ENCODE measurements at regions of chr1 and their contacts with region 1.

Region 1: DNA sequence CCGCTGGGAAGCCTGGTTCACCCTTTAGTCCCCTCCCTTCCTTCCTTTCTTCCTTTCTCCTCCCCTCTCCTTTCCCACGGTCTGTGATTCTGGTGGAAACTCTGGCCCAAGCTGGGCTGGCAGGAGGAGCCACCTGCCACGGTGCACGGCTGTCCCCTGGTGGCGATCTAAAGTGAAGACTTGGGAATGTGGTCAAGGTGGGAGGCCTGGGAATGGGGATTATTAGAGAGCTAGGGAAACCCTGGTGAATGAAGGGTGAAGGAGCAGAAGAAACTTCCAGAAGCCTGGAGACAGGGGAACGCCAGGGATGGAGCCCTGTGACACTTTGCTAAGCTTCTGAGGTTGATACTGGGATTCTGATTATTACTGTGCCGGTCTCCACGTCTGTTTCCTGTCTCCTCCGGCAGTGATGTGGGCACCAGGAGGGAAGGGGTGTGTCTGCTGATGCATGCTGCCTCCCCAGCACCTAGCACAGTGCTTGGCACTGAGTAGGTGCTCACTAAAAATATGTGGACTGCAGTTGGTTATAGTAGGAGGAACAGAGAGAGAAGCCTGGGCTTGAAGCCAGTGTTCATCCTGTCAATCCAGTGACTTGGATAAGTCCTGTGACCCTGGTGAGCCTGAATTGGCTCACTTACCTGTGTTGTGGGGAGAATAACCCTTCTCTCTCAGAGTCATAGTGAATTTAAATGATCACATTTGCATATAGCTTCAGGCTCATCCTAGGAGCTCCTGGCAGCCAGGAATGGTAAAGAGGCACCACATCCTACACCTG is 71.2 kb upstream of the NBPF3 start:
- DNase-seq: peak; percentile 66 to 94 (median 85)

Region 2: DNA sequence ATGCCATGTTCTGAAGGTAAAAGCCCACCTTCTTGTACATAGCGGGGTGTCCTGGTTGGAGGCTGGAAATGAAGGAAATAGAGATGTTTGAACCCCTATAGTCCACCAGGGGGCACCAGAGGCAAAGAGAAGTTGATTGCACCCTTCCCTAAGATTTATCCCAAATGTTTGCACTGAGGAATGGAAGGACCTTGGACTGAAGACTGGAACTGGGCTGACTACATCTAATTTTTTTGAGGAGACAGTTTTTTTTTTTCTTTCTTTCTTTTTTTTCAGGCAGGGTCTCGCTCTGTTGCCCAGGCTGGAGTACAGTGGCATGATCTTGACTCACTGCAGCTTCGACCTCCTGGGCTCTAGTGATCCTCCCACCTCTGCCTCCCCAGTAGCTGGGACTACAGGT is 136.7 kb before region 1 on chr1:
- intact Hi-C with region 1: loop called (anchors 5 kb)
- DNase-seq: peak in 34 of 42 donors; percentile 10 to 86 (median 60)

Region 3: DNA sequence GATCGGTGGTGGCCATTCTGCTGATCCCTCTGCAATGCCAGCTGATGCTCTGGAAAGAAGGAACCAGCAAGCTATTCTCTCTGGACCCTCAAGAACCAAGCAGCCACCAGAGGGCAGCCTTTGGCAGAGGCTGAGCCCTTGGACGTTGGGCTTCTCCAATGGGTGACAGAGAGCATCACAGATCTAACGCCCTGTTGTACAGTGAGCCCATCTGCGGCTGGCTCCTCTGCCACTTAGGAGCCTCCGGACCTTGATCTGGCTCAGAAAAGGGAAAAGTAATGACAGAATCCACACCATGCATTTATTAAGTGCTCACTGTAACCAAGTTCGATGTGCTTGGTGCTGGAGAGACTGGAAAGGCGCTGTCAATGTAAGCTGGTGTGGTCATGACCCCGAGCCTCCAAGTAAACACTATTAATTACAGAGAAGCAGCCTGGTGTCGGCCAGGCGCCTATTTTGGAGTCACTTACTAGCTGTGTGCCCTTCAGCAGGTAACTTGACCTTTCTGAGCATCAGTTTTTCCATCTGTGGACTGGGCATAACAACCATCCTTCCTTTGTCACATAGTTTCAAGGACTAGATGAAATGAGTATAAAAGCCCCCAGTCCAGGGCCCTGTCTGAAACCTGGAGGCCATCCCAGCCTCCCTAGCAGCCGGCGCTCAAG is 113.3 kb before region 1 on chr1:
- intact Hi-C with region 1: loop called (anchors 2 kb)
- DNase-seq: peak; percentile 79 to 99 (median 96)